ENCODE measurements at regions of chr5 and their contacts with region 1.

Region 1: GRCh38 chr5:61408476-61409168 is 76.6 kb downstream of the ZSWIM6 start:
- DNase-seq: peak; percentile 96 to 99 (median 98)
- H3K4me3 ChIP-seq: no peak overlapping the region
- H3K4me3 Mint-ChIP-seq: peak overlapping the region; percentile 78 to 91 (median 84)
- H3K27ac ChIP-seq: no peak overlapping the region
- H3K27ac Mint-ChIP-seq: peak overlapping the region; percentile 86 to 97 (median 94)
- H3K4me1 ChIP-seq: peaks cover 19% of the 10 kb centered on the region
- H3K4me1 Mint-ChIP-seq: peaks cover 18 to 35% (median 26%) of the 10 kb centered on the region in 4 donors
- H3K27me3 ChIP-seq: no peaks in the 10 kb centered on the region
- H3K27me3 Mint-ChIP-seq: peaks cover 0 to 2% of the 10 kb centered on the region in 2 donors

Region 2: GRCh38 chr5:61162010-61162831 is 246.4 kb before region 1 on chr5 and contains the start of gene SMIM15:
- CTCF ChIA-PET with region 1: no interaction called
- POLR2A ChIA-PET with region 1: no interaction called
- intact Hi-C with region 1: loop called (anchors 1 kb)
- DNase-seq: peak; percentile 67 to 77 (median 72)
- H3K4me3 ChIP-seq: peak within 1 kb of the TSS; percentile 88
- H3K4me3 Mint-ChIP-seq: peak within 1 kb of the TSS; percentile 92 to 100 (median 96)
- H3K27ac ChIP-seq: peak within 1 kb of the TSS; percentile 67
- H3K27ac Mint-ChIP-seq: peak within 1 kb of the TSS; percentile 89 to 99 (median 96)
- H3K4me1 ChIP-seq: peaks cover 26% of the 10 kb centered on the region
- H3K4me1 Mint-ChIP-seq: peaks cover 29 to 46% (median 38%) of the 10 kb centered on the region in 4 donors
- H3K27me3 ChIP-seq: no peaks in the 10 kb centered on the region
- H3K27me3 Mint-ChIP-seq: no peaks in the 10 kb centered on the region
- total RNA-seq, gene SMIM15: 33.1 to 37.7 TPM

Measured in CD4-positive, alpha-beta memory T cell (primary cell).